GM12878 (cell line): ENCODE measurements at regions of chr6 and their contacts with region 1.

Region 1: GRCh38 chr6:107847844-107848802 is 24.0 kb upstream of the SCML4 start:
- DNase-seq: no peak
- ATAC-seq: peak; percentile 98
- H3K4me3 ChIP-seq: peak overlapping the region; percentile 24; the same call in 1 of the 2 replicates
- H3K27ac ChIP-seq: no peak overlapping the region
- H3K4me1 ChIP-seq: no peaks in the 10 kb centered on the region
- H3K27me3 ChIP-seq: peaks cover 1 to 3% of the 10 kb centered on the region in 2 experiments
- CTCF ChIP-seq: peak; percentile 83 to 92 (median 85)
- EP300 ChIP-seq: no peak
- POLR2A ChIP-seq: no peak
- RAD21 ChIP-seq: peak; percentile 65

Region 2: DNA sequence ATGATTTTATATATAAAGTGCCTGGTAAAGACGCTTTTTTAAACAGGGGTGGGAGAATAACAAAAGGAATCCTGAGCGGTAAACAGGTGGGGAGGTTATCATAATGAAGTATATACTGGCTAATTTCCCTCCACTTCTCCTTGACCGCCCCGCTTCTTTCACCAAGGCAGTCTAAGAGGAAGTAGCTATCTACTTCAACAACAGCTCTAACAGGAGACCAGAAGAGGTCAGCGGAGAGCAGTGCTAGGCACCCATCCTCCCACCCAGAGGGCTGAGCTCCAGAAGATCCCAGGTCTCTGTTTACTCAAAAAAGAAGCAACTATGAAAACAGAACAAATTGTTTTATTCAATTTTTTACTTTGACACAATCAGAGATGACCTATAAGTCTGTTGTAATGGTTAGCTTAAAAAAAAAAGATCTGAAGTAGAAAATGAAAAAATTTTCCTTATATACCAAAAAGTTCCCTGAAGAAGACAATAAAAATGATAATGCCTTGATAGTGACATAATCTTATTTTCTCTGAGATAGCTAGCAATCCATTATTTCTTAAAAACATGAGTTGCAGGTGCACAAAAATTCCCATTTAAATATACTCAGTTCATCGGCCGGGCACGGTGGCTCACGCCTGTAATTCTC is 529.9 kb before region 1 on chr6:
- CTCF ChIA-PET with region 1: interaction called, 10 read pairs
- POLR2A ChIA-PET with region 1: no interaction called
- RAD21 ChIA-PET with region 1: interaction called, 3 read pairs
- SMC1A ChIA-PET with region 1: interaction called, 3 read pairs
- in situ Hi-C with region 1: no loop called
- intact Hi-C with region 1: no loop called
- DNase-seq: peak; percentile 7
- ATAC-seq: peak; percentile 99
- H3K4me3 ChIP-seq: no peak overlapping the region
- H3K27ac ChIP-seq: no peak overlapping the region
- H3K4me1 ChIP-seq: no peaks in the 10 kb centered on the region
- H3K27me3 ChIP-seq: no peaks in the 10 kb centered on the region
- CTCF ChIP-seq: peak; percentile 64 to 83 (median 71)
- EP300 ChIP-seq: no peak
- POLR2A ChIP-seq: no peak
- RAD21 ChIP-seq: peak; percentile 86

Region 3: DNA sequence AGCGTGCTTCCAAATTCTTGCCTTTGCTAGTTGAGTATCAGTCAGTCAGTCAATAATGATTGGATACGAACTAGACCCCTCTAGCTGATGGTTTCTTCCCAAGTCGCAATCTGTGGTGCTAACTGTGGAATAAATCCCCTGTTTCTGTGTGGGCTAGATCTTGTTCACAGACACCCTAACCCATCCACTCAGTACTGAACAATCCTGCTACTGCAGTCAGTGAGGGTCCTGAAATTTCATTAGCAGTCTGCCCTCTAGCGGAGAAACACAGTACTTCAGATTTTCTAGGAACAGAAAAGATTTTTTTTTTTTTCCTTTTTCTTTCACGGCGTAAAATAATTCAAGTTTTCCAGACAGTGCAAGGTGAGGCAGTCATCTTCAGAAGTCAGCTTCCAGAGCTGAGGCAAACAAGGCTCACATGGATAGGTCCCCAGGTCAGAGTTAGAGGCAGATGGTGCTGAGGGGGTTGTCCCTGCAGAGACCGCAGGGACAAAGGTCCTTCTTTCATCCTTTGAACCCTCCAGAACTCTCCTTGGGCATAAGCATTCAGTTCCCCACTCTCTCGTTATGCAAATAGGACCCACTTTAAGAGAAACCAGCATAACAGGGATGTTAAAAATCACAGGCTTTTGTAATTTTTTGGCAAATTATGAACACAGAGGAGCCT is 143.6 kb before region 1 on chr6:
- CTCF ChIA-PET with region 1: interaction called, 16 read pairs
- POLR2A ChIA-PET with region 1: no interaction called
- RAD21 ChIA-PET with region 1: no interaction called
- SMC1A ChIA-PET with region 1: interaction called, 4 read pairs
- in situ Hi-C with region 1: no loop called
- intact Hi-C with region 1: loop called (anchors 10 kb)
- DNase-seq: no peak
- ATAC-seq: peak; percentile 71
- H3K4me3 ChIP-seq: no peak overlapping the region
- H3K27ac ChIP-seq: no peak overlapping the region
- H3K4me1 ChIP-seq: no peaks in the 10 kb centered on the region
- H3K27me3 ChIP-seq: no peaks in the 10 kb centered on the region
- CTCF ChIP-seq: peak; percentile 60 to 80 (median 69); a peak in 5 of 6 replicates
- EP300 ChIP-seq: no peak
- POLR2A ChIP-seq: no peak
- RAD21 ChIP-seq: peak; percentile 70

Region 4: GRCh38 chr6:107813555-107814194 is 34.4 kb before region 1 on chr6:
- CTCF ChIA-PET with region 1: interaction called, 25 read pairs
- POLR2A ChIA-PET with region 1: no interaction called
- RAD21 ChIA-PET with region 1: interaction called, 17 read pairs
- SMC1A ChIA-PET with region 1: interaction called, 10 read pairs
- in situ Hi-C with region 1: no loop called
- intact Hi-C with region 1: no loop called
- DNase-seq: no peak
- ATAC-seq: no peak
- H3K4me3 ChIP-seq: no peak overlapping the region
- H3K27ac ChIP-seq: no peak overlapping the region
- H3K4me1 ChIP-seq: no peaks in the 10 kb centered on the region
- H3K27me3 ChIP-seq: peaks cover 3 to 5% of the 10 kb centered on the region in 2 experiments; a peak in 3 of 4 replicates
- CTCF ChIP-seq: no peak
- EP300 ChIP-seq: no peak
- POLR2A ChIP-seq: no peak
- RAD21 ChIP-seq: no peak

Region 5: GRCh38 chr6:107832151-107833056 is 15.7 kb before region 1 on chr6:
- CTCF ChIA-PET with region 1: interaction called, 21 read pairs
- POLR2A ChIA-PET with region 1: no interaction called
- RAD21 ChIA-PET with region 1: interaction called, 4 read pairs
- SMC1A ChIA-PET with region 1: interaction called, 8 read pairs
- in situ Hi-C with region 1: no loop called
- intact Hi-C with region 1: no loop called
- DNase-seq: no peak
- ATAC-seq: no peak
- H3K4me3 ChIP-seq: no peak overlapping the region
- H3K27ac ChIP-seq: no peak overlapping the region
- H3K4me1 ChIP-seq: no peaks in the 10 kb centered on the region
- H3K27me3 ChIP-seq: peaks cover 0 to 1% of the 10 kb centered on the region in 2 experiments; a peak in 2 of 4 replicates
- CTCF ChIP-seq: no peak
- EP300 ChIP-seq: no peak
- POLR2A ChIP-seq: no peak
- RAD21 ChIP-seq: no peak

Region 6: GRCh38 chr6:107894821-107895396 is 46.8 kb after region 1 on chr6:
- CTCF ChIA-PET with region 1: interaction called, 10 read pairs
- POLR2A ChIA-PET with region 1: no interaction called
- RAD21 ChIA-PET with region 1: no interaction called
- SMC1A ChIA-PET with region 1: no interaction called
- in situ Hi-C with region 1: no loop called
- intact Hi-C with region 1: no loop called
- DNase-seq: peak; percentile 12
- ATAC-seq: peak; percentile 82
- H3K4me3 ChIP-seq: no peak overlapping the region
- H3K27ac ChIP-seq: no peak overlapping the region
- H3K4me1 ChIP-seq: peaks cover 10% of the 10 kb centered on the region
- H3K27me3 ChIP-seq: no peaks in the 10 kb centered on the region
- CTCF ChIP-seq: no peak
- EP300 ChIP-seq: no peak
- POLR2A ChIP-seq: no peak
- RAD21 ChIP-seq: no peak